ENCODE measurements at regions of chr7 and their contacts with region 1.

Region 1: DNA sequence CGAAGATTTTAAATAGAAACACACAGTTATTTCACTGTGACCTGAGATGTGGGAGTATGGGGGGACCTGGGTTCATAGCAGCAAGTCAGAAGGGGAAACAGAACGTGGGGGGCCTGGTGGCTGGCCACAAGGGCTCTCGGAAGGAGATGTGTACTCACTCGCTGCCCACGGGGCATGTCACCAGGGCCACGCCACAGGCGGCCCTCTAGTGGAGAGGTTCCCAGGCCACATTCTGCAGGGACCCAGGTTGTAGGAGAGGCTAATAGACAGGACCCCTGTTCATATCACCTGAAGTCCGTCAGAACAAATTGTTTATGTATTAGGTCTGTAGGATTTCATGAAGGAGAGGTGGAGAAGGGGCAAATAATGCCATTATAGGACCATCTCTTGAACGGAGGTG is 25.1 kb upstream of the SVOPL start:
- DNase-seq: no peak
- ATAC-seq: no peak
- H3K4me3 ChIP-seq: no peak overlapping the region
- H3K27ac ChIP-seq: no peak overlapping the region
- H3K4me1 ChIP-seq: no peaks in the 10 kb centered on the region
- H3K27me3 ChIP-seq: no peaks in the 10 kb centered on the region
- CTCF ChIP-seq: no peak

Region 2: GRCh38 chr7:138015096-138015495 is 711.2 kb before region 1 on chr7:
- CTCF ChIA-PET with region 1: no interaction called
- POLR2A ChIA-PET with region 1: interaction called, 10 read pairs
- in situ Hi-C with region 1: no loop called
- intact Hi-C with region 1: no loop called
- DNase-seq: no peak
- ATAC-seq: no peak
- H3K4me3 ChIP-seq: no peak overlapping the region
- H3K27ac ChIP-seq: no peak overlapping the region
- H3K4me1 ChIP-seq: no peaks in the 10 kb centered on the region
- H3K27me3 ChIP-seq: no peaks in the 10 kb centered on the region
- CTCF ChIP-seq: no peak

Region 3: GRCh38 chr7:138161600-138162081 is 564.6 kb before region 1 on chr7:
- CTCF ChIA-PET with region 1: interaction called, 11 read pairs
- POLR2A ChIA-PET with region 1: no interaction called
- in situ Hi-C with region 1: no loop called
- intact Hi-C with region 1: no loop called
- DNase-seq: peak; percentile 61
- ATAC-seq: peak; percentile 89
- H3K4me3 ChIP-seq: no peak overlapping the region
- H3K27ac ChIP-seq: no peak overlapping the region
- H3K4me1 ChIP-seq: no peaks in the 10 kb centered on the region
- H3K27me3 ChIP-seq: no peaks in the 10 kb centered on the region
- CTCF ChIP-seq: peak; percentile 72

Region 4: GRCh38 chr7:138776166-138776894 is 50.0 kb after region 1 on chr7:
- CTCF ChIA-PET with region 1: no interaction called
- POLR2A ChIA-PET with region 1: interaction called, 12 read pairs
- in situ Hi-C with region 1: no loop called
- intact Hi-C with region 1: no loop called
- DNase-seq: no peak
- ATAC-seq: no peak; the same call in 1 of the 2 replicates
- H3K4me3 ChIP-seq: no peak overlapping the region
- H3K27ac ChIP-seq: no peak overlapping the region
- H3K4me1 ChIP-seq: no peaks in the 10 kb centered on the region
- H3K27me3 ChIP-seq: no peaks in the 10 kb centered on the region
- CTCF ChIP-seq: no peak